ENCODE measurements at regions of chr5 and their contacts with region 1.

Region 1: DNA sequence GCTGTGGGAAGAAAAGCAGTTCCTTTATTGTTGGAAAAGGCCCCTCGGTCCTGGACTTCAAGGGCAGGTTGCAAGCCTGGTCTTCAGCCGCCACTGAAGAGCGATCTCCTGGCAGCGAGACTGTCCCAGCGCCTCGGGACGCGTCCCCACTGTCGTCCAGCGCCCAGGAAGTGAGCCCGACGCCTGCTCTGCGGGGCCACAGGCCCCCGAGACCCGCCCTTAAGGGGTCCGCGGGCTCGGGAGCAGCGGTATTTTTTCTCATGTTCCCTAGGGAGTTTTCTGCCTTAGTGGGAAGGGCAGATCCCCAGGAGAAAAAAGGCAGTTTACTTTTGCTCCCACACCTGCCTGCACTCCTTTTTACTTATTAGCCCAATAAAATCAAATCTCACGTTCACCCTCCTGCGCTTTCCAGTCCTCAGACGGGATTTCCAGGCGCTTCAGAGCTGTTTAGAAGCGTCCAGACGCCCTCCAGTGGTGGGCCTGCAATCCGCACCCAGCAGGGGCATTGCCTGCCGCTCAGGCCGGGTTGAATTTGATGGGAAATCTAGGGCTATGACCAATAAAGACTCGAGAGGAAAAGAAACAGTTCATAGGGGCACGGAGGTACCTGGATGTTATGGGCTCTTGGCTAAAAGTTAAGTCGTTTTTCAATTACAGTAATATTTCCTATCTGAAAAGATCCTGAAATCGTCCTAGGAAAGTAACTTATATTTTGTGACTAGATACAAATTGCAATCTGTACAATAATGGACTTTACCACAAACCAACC is 2.8 kb upstream of the EFNA5 start:
- DNase-seq: peak; percentile 93
- H3K4me3 ChIP-seq: peak overlapping the region; percentile 74
- H3K27ac ChIP-seq: peak overlapping the region; percentile 28
- H3K4me1 ChIP-seq: peaks cover 25% of the 10 kb centered on the region
- CTCF ChIP-seq: peak; percentile 99

Region 2: DNA sequence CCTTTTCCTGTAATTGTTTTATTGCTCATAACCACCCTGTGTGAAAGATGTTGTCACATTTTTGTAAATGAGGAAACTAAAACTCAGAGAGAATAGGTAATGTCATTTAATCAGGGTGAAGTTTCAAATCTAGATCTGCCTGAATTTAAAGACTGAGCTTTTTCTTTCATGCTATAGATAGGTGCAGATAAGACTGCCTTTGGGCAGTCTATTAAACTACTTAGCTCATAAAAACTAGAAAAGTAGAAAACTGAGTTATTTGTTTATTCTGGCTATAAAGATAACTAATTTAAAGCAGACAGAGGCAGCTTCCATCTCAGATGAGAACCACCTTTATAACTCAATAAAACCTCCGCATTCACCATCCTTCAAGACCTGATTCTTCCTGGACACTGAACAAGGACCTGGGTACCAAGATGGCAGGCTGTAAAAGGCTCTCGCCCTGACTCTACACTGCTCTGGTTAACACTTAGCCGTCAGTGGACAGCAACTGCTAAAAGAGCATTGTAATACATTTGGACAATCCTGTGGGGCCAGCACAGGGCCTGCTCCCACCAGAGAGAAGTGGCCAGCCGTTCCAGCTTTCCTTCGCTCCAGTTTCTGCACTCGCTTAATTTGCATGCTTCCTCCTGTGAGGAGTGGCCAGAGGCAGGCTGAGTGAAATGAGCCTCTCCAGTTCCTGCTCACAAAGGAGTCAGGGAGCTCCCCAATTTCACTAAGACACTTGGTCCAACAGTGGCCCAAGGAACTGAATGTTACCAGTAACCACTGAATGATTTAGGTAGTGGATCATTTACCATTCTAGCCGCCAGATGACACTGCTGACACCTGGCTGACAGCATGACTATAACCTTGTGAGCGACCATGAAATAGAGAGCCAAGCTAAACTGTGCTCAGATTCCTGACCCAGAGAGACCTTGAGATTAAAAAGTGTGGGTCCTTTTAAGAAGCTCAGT is 569.2 kb before region 1 on chr5:
- CTCF ChIA-PET with region 1: no interaction called
- POLR2A ChIA-PET with region 1: interaction called, 3 read pairs
- intact Hi-C with region 1: loop called (anchors 1 kb)
- DNase-seq: peak; percentile 75
- H3K4me3 ChIP-seq: no peak overlapping the region
- H3K27ac ChIP-seq: no peak overlapping the region
- H3K4me1 ChIP-seq: peaks cover 6% of the 10 kb centered on the region
- CTCF ChIP-seq: peak; percentile 78

Region 3: DNA sequence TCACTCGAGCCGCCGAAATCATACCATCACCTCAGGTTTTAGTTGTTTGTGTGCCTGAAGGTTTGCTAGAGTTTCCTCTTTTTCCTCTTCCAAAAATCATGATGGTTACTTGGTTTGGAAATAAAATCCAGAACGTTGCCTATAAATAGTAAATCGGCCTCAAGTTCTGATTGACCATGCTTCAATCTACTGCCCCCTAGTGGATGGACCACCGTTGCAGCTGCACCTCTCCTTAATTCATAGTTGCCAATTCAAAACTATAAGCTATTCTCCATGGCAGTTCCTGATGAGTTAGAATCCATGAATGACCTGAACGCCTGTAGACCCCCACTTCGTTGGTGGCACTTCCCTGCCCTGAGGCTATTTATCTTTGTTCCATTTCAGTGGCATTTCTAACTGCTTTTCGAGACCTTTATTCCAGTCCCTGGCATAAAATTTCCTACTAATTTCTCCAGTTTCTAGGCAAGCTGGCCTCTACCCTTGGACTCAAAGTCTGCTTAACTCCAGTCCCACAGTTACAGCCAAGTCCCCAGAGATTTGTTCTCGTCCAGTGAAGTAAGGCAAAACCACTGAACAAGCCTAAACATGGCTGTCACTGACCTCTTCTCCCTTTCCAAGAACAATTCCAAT is 425.4 kb before region 1 on chr5:
- CTCF ChIA-PET with region 1: no interaction called
- POLR2A ChIA-PET with region 1: interaction called, 5 read pairs
- intact Hi-C with region 1: loop called (anchors 5 kb)
- DNase-seq: peak; percentile 62
- H3K4me3 ChIP-seq: no peak overlapping the region
- H3K27ac ChIP-seq: no peak overlapping the region
- H3K4me1 ChIP-seq: peaks cover 8% of the 10 kb centered on the region
- CTCF ChIP-seq: peak; percentile 99

Region 4: DNA sequence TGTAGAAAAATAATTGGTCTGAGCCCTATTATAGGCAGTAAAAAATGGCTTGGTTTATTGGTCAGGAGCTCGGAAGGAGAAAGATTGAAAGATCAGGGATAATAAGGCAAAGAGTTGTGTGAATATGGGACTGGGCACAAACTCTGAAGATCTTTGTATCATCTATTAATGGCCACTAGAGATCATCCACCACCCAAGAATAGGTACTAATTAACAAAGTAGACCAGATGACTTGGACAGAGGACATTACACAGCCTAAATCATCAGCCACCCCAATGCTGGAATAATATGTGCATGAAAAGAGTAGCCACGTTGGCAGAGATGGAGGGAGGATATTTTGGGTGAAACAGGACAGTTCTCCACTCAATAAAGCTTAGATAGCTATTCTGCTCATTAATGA is 367.0 kb before region 1 on chr5:
- CTCF ChIA-PET with region 1: no interaction called
- POLR2A ChIA-PET with region 1: no interaction called
- intact Hi-C with region 1: loop called (anchors 5 kb)
- DNase-seq: peak; percentile 13
- H3K4me3 ChIP-seq: no peak overlapping the region
- H3K27ac ChIP-seq: no peak overlapping the region
- H3K4me1 ChIP-seq: peaks cover 18% of the 10 kb centered on the region
- CTCF ChIP-seq: no peak

Region 5: GRCh38 chr5:107359033-107359915 is 314.3 kb before region 1 on chr5:
- CTCF ChIA-PET with region 1: no interaction called
- POLR2A ChIA-PET with region 1: interaction called, 3 read pairs
- intact Hi-C with region 1: loop called (anchors 1 kb)
- DNase-seq: peak; percentile 29
- H3K4me3 ChIP-seq: no peak overlapping the region
- H3K27ac ChIP-seq: peak overlapping the region; percentile 21
- H3K4me1 ChIP-seq: peaks cover 30% of the 10 kb centered on the region
- CTCF ChIP-seq: no peak

Region 6: DNA sequence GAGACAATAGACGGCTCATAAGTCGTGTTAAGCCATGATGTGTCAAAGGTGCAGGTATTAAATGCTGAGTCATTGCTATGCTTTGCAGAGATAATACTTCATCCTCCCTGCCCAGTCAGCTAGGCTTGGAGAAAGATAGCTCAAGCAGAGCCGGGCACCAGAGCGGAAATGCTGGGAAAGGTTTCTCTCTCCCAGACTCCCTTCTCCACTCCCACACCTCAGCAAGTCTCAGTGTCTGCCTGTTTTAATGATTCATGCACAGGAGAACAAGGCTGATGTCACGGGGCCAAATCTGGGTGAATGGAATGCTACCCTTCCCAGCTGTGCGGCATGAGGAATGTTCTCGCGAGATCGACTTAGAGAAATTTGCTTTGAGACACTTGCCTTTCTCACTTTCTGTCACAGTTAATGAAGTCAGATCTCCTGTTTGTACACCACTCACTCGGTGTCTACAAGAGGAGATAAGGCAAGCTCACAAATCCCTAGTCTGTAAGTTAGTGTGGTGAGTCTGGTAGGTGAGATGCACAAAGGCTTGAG is 207.3 kb before region 1 on chr5:
- CTCF ChIA-PET with region 1: no interaction called
- POLR2A ChIA-PET with region 1: no interaction called
- intact Hi-C with region 1: loop called (anchors 5 kb)
- DNase-seq: no peak
- H3K4me3 ChIP-seq: no peak overlapping the region
- H3K27ac ChIP-seq: no peak overlapping the region
- H3K4me1 ChIP-seq: peaks cover 78% of the 10 kb centered on the region
- CTCF ChIP-seq: no peak

Region 7: GRCh38 chr5:107719034-107719606 is 45.6 kb after region 1 on chr5:
- CTCF ChIA-PET with region 1: no interaction called
- POLR2A ChIA-PET with region 1: no interaction called
- intact Hi-C with region 1: no loop called
- DNase-seq: no peak
- H3K4me3 ChIP-seq: no peak overlapping the region
- H3K27ac ChIP-seq: no peak overlapping the region
- H3K4me1 ChIP-seq: no peaks in the 10 kb centered on the region
- CTCF ChIP-seq: no peak